Activated naive CD4-positive, alpha-beta T cell treated with anti-CD3 and anti-CD28 coated beads for 36 hours (primary cell): ENCODE measurements at regions of chr21 and their contacts with region 1.

Region 1: DNA sequence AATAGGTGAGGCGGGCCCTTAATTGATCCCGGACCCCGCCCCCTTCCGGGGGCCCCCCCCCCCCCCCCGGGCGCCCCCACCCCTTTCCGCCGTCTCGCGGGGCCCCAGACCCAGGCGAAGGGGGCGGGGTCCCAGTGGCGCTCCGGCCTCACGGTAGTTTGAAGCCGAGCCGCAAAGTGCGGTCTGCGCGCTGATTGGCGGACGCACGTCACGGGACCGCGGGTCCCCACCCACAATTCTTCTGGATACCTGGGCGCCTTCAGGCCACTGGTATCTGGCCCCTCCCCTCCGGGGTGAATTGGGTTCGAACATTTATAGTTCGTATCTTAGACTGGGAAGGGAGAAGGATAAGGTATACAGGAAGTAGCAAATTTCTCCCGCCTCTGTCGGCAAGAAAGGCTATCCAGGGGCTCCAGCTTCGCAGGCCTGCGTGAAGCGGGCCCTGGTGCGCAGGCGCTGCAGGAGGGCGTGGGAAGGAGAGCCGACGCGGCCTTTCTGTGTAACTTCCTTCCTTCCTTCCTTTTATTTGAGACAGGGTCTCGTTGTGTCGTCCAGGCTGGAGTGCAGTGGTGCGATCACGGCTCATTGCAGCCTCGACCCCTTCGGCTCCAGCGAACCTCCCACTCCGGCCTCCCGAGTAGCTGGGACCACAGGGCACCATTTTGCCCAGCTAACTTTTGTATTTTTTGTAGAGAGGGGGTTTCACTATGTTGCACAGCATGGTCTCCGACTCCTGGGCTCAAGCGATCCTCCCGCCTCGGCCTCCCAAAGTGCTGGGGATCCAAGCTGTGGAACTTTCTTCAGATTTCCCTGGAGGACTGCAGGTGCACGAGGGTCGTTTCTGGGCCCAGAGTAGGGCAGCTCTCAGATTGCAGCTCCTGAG is 564 bp upstream of the HMGN1 start:
- DNase-seq: peak; percentile 98
- H3K4me3 Mint-ChIP-seq: peak overlapping the region; percentile 99
- H3K27ac Mint-ChIP-seq: peak overlapping the region; percentile 99
- H3K4me1 Mint-ChIP-seq: peaks cover 32% of the 10 kb centered on the region
- H3K27me3 Mint-ChIP-seq: no peaks in the 10 kb centered on the region

Region 2: GRCh38 chr21:39183237-39184007 is 166.0 kb before region 1 on chr21 and contains the start of gene PSMG1:
- CTCF ChIA-PET with region 1: interaction called, 3 read pairs
- intact Hi-C with region 1: loop called (anchors 1 kb)
- DNase-seq: peak; percentile 94
- H3K4me3 Mint-ChIP-seq: peak within 1 kb of the TSS; percentile 92
- H3K27ac Mint-ChIP-seq: peak within 1 kb of the TSS; percentile 90
- H3K4me1 Mint-ChIP-seq: peaks cover 62% of the 10 kb centered on the region
- H3K27me3 Mint-ChIP-seq: no peaks in the 10 kb centered on the region
- total RNA-seq, gene PSMG1: 70.8 to 70.9 TPM

Region 3: DNA sequence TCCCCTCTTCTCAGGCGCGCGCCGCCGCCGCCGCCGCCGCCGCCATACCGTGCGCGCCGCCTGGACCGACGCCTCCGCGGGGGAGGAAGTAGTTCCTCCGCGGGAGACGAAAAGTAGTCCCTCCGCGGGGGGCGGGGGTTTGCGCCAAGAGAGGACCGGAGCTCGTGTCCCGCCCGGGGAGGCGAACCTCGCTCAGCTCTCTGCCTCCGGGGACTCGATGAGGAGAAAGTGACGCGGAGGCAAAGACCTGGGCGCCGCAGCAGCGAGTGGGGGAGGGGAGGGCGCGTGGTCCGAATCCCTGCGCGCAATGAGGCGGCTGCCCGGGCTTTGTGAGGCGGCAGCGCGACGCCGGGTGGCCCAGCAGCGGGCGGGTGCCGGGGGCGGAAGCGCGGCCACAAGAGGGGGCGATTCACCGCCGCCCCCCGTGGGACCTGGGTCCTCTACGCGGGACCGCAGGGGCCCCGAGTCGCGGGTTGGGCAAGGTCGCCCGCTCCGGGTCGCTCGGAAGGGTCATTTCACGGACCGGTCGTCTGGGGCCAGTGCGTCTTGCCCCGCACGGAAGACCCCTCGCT is 35.8 kb before region 1 on chr21 and contains the start of gene BRWD1:
- CTCF ChIA-PET with region 1: interaction called, 6 read pairs
- intact Hi-C with region 1: loop called (anchors 1 kb)
- DNase-seq: peak; percentile 75
- H3K4me3 Mint-ChIP-seq: peak within 1 kb of the TSS; percentile 93
- H3K27ac Mint-ChIP-seq: peak within 1 kb of the TSS; percentile 97
- H3K4me1 Mint-ChIP-seq: peaks cover 42% of the 10 kb centered on the region
- H3K27me3 Mint-ChIP-seq: no peaks in the 10 kb centered on the region
- total RNA-seq, gene BRWD1: 23.0 to 24.5 TPM

Region 4: DNA sequence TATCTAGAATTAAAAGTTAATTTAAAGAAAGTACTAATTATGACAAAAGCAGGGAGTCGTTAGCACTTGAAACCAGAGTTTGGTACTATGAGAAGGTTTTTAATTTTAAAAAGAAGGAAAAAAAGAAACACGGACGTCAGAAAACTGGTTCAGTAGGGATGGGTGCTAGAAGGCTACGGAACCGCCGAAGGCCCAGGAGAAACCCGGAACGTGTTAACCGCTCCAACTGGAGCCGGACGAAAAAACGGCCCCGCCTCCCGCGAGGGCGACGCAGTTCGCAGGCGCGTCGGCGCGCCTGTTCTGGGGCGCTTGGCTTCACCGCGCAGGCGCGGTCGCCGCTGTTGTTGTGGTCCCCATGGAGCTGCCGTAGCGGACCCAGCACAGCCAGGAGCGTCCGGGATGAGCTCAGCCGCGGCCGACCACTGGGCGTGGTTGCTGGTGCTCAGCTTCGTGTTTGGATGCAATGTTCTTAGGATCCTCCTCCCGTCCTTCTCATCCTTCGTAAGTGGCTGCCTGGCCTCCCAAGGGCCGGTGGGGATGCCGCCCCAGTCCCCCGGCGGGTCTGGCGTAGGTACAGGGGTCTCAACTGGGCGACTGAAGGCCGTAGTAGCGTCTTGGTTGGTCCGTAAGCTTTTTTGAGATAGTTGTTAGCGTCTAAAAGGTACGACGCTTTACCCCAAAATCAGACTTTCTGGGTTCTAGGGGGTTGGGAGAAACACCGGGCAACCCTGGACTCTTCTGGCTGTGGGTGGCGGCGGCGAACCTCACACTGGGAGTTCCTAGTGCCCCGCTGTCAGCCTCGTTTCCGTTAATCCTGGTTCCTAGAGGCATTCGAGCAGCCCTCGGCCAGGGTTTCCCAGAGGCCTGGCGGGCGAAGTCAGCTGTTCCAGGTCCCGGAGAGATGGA is 30.8 kb after region 1 on chr21:
- CTCF ChIA-PET with region 1: interaction called, 4 read pairs
- intact Hi-C with region 1: loop called (anchors 1 kb)
- DNase-seq: peak; percentile 94
- H3K4me3 Mint-ChIP-seq: peak overlapping the region; percentile 91
- H3K27ac Mint-ChIP-seq: peak overlapping the region; percentile 76
- H3K4me1 Mint-ChIP-seq: peaks cover 23% of the 10 kb centered on the region
- H3K27me3 Mint-ChIP-seq: no peaks in the 10 kb centered on the region